ENCODE measurements at regions of chr14 and their contacts with region 1.

Region 1: GRCh38 chr14:20697273-20698017 is 8.9 kb downstream of the ANG start:
- DNase-seq: peak in 1 of 2 donors; percentile 64
- ATAC-seq: no peak
- H3K4me3 ChIP-seq: no peak overlapping the region
- H3K27ac ChIP-seq: no peak overlapping the region
- H3K4me1 ChIP-seq: no peaks in the 10 kb centered on the region
- H3K27me3 ChIP-seq: no peaks in the 10 kb centered on the region

Region 2: DNA sequence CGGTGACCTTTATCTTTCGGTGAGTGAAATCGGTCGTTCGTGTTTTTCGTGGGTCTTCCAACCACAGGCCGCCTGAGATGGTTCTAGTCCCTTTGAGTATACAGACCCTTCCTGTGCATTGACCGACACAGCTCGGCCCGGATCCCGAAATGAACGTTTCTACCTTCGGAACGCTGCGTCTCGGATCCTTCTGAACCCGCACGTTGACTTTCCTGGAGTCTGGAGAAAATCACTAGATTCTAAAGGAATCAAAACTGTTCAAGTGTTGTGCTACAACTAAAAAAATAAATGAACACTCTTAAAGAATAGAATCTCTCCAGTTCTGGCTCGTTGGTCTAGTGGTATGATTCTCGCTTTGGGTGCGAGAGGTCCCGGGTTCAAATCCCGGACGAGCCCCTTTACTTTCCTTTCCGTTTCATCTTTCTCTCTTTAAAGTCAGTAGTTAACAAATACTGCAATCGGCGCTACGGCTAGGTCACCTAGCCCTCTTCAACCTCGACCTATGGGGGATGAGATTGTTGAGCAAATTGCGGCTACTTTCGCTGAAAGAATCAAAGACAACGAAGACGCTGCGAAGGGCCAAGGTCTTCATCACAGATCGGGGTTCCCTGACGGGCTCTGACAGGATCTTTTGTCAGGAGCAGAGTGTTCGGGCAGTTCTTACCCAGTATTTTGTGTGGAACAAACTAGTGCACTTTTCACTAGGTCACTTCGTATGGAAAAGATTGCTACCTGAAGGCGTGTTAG is 64.6 kb before region 1 on chr14:
- intact Hi-C with region 1: no loop called
- DNase-seq: no peak
- ATAC-seq: peak; percentile 70
- H3K4me3 ChIP-seq: no peak overlapping the region
- H3K27ac ChIP-seq: no peak overlapping the region
- H3K4me1 ChIP-seq: no peaks in the 10 kb centered on the region
- H3K27me3 ChIP-seq: no peaks in the 10 kb centered on the region

Region 3: GRCh38 chr14:20855652-20856291 is 158.3 kb after region 1 on chr14:
- intact Hi-C with region 1: loop called (anchors 5 kb)
- DNase-seq: peak in 1 of 2 donors; percentile 58
- ATAC-seq: peak; percentile 83
- H3K4me3 ChIP-seq: no peak overlapping the region
- H3K27ac ChIP-seq: no peak overlapping the region
- H3K4me1 ChIP-seq: no peaks in the 10 kb centered on the region
- H3K27me3 ChIP-seq: no peaks in the 10 kb centered on the region

Region 4: DNA sequence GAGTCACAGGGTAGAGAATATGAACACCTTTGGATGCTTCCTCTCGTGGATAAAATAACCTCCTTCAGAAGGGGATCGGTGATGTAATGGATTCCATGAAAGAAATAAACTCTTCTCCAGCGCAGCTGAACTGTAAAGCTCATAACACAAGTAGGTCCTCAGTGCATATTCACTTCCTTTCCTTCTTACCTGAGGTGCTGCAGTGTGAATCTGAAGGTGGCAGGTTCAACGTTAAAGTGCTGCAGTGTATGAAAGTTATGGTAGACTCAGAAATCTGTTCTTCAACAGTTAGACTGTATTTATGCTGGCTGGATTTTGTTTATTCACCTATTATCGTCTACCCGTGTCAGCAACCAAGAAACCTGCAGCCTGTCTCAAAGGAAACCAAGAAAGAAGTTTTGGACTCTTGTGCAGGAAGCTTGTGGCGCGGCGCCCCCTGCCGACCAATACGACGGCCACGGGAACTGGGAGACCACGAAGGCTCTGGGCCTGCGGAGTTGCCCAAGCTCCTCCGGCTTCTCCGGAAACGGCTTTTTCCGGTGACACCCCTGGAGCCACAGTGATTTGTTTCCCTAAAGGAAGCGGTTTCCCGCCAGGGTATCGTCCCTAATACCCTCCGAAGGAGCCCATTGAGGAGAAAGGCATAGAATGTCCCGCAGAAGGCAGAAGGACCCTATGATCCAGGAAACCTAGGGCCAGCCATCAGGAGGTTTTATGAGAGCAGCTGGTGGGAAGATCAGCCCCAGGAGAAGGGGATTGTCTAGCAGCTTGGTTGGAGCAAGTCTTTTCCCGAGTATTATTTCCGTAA is 176.1 kb after region 1 on chr14:
- intact Hi-C with region 1: loop called in 1 of 2 experiments (anchors 5 kb)
- DNase-seq: peak; percentile 92 to 93
- ATAC-seq: peak; percentile 76
- H3K4me3 ChIP-seq: no peak overlapping the region
- H3K27ac ChIP-seq: no peak overlapping the region
- H3K4me1 ChIP-seq: no peaks in the 10 kb centered on the region
- H3K27me3 ChIP-seq: no peaks in the 10 kb centered on the region

Measured in aorta (tissue), 5 donors.